ENCODE measurements at regions of chr1 and their contacts with region 1.

Region 1: GRCh38 chr1:225597926-225598575 is 54.9 kb downstream of the ENAH start:
- DNase-seq: no peak
- ATAC-seq: no peak
- H3K4me3 ChIP-seq: no peak overlapping the region
- H3K27ac ChIP-seq: no peak overlapping the region
- H3K4me1 ChIP-seq: no peaks in the 10 kb centered on the region
- H3K27me3 ChIP-seq: no peaks in the 10 kb centered on the region

Region 2: GRCh38 chr1:224356685-224357625 is 1241.1 kb before region 1 on chr1 and contains the start of gene CNIH4:
- intact Hi-C with region 1: no loop called
- DNase-seq: peak; percentile 92 to 96 (median 96)
- ATAC-seq: peak; percentile 98 to 99
- H3K4me3 ChIP-seq: peak within 1 kb of the TSS; percentile 78
- H3K27ac ChIP-seq: peak within 1 kb of the TSS; percentile 88
- H3K4me1 ChIP-seq: peaks cover 9% of the 10 kb centered on the region
- H3K27me3 ChIP-seq: no peaks in the 10 kb centered on the region
- total RNA-seq, gene CNIH4: 26.8 to 35.3 (median 32.2) TPM

Region 3: DNA sequence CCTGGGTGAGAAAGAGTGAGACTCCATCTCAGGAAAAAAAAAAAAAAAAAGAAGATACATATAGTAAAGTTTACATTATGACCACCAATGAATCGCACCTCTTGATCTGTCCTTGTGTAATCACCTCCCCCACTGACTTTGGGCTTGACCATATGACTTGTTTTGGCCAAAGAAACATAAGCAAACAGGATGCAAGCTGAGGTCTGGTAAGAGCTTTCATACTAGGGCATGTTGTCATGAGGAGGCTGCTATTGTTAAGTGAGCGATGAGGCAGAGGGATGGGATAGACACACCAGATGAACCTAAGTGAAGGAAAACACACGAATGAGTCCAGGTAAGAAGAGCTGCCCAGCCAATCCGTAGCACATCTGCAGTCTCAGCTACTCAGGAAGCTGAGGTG is 44.1 kb after region 1 on chr1:
- intact Hi-C with region 1: loop called in 1 of 4 experiments (anchors 10 kb)
- DNase-seq: no peak
- ATAC-seq: no peak
- H3K4me3 ChIP-seq: no peak overlapping the region
- H3K27ac ChIP-seq: no peak overlapping the region
- H3K4me1 ChIP-seq: peaks cover 2% of the 10 kb centered on the region
- H3K27me3 ChIP-seq: no peaks in the 10 kb centered on the region